Activated B cell treated with CpG ODN at 0.5 μM for 24 hours (primary cell): ENCODE measurements at regions of chr2 and their contacts with region 1.

Region 1: DNA sequence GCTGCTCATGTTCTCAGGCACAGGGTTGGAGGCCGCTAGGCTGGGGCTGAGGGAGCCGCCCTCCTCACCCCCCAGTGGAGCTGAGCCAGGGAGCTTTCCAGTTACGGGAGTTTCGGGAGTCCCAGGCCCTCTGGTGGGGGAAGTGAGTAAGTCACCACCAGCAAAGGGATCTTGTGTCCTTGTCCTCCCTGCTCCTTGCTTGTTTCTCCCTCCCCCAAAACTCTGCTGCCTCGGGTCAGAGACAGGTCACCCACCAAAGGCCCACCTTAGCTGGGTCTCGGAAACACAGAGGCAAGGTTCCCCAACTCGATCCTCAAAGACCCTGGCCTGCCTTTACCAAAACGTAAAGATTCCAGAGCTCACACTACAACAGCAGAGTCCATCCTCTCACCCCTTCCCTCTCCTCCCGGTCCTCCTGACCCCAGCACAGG is 60.5 kb upstream of the POMC start:
- DNase-seq: no peak
- ATAC-seq: peak; percentile 59
- H3K4me3 Mint-ChIP-seq: no peak overlapping the region
- H3K27ac Mint-ChIP-seq: no peak overlapping the region
- H3K4me1 Mint-ChIP-seq: peaks cover 18% of the 10 kb centered on the region
- H3K27me3 Mint-ChIP-seq: no peaks in the 10 kb centered on the region
- CTCF ChIP-seq: no peak

Region 2: DNA sequence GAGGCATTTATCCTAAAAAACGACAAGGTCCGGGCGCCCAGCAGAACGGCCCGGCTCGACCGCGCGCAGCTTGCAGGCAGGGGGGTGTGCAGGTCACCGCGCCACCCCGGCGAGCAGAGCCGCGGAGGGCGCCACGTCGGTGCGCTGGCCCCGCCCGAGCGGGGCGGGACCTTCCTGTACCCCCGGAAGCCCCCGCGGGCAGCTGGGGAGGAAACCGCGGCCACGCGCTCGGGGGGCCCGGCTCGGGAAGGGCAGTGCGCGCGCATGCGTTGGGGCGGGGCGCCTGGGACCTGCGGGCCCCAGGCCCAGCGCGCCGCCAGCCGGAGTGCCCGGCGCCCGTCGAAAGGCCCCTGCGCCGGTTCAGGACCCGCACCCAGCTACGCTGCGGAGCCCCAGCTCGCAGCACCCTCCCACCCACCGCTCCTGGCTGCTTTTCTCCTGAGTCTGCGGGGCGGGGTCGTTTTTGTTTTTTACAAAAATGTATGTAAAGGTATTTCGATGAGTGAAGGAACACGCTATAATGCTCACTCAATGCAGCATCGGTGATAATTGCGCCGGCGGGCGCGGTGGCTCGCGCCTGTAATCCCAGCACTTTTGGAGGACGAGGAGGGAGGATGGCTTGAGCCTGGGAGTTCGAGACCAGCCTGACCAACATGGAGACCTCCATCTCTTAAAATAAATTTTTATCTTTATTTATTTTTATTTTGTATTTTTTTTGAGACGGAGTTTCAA is 12.7 kb before region 1 on chr2:
- CTCF ChIA-PET with region 1: interaction called, 3 read pairs
- POLR2A ChIA-PET with region 1: interaction called, 10 read pairs
- intact Hi-C with region 1: loop called (anchors 2 kb)
- DNase-seq: peak; percentile 85
- ATAC-seq: peak; percentile 94
- H3K4me3 Mint-ChIP-seq: peak overlapping the region; percentile 72
- H3K27ac Mint-ChIP-seq: peak overlapping the region; percentile 32
- H3K4me1 Mint-ChIP-seq: peaks cover 21% of the 10 kb centered on the region
- H3K27me3 Mint-ChIP-seq: no peaks in the 10 kb centered on the region
- CTCF ChIP-seq: no peak